Natural killer cell (primary cell): ENCODE measurements at regions of chr1 and their contacts with region 1.

Region 1: GRCh38 chr1:107936498-107937481 is 28.2 kb downstream of the VAV3 start:
- DNase-seq: peak; percentile 64 to 71
- ATAC-seq: peak; percentile 84 to 92 (median 91)
- H3K4me3 ChIP-seq: no peak overlapping the region
- H3K4me3 Mint-ChIP-seq: peak overlapping the region; percentile 76
- H3K27ac ChIP-seq: peak overlapping the region; percentile 59
- H3K27ac Mint-ChIP-seq: peak overlapping the region; percentile 83 to 90
- H3K4me1 ChIP-seq: peaks cover 31% of the 10 kb centered on the region
- H3K4me1 Mint-ChIP-seq: peaks cover 82 to 87% of the 10 kb centered on the region in 2 donors
- H3K27me3 ChIP-seq: no peaks in the 10 kb centered on the region
- H3K27me3 Mint-ChIP-seq: no peaks in the 10 kb centered on the region
- CTCF ChIP-seq: no peak

Region 2: GRCh38 chr1:107782217-107782845 is 154.5 kb before region 1 on chr1:
- intact Hi-C with region 1: loop called (anchors 1 kb)
- DNase-seq: peak in 1 of 2 donors; percentile 86
- ATAC-seq: peak in 1 of 3 donors; percentile 45
- H3K4me3 ChIP-seq: no peak overlapping the region
- H3K4me3 Mint-ChIP-seq: no peak overlapping the region
- H3K27ac ChIP-seq: no peak overlapping the region
- H3K27ac Mint-ChIP-seq: peak overlapping the region; percentile 91 to 92
- H3K4me1 ChIP-seq: peaks cover 18% of the 10 kb centered on the region
- H3K4me1 Mint-ChIP-seq: peaks cover 50 to 55% of the 10 kb centered on the region in 2 donors
- H3K27me3 ChIP-seq: no peaks in the 10 kb centered on the region
- H3K27me3 Mint-ChIP-seq: no peaks in the 10 kb centered on the region
- CTCF ChIP-seq: peak; percentile 95

Region 3: DNA sequence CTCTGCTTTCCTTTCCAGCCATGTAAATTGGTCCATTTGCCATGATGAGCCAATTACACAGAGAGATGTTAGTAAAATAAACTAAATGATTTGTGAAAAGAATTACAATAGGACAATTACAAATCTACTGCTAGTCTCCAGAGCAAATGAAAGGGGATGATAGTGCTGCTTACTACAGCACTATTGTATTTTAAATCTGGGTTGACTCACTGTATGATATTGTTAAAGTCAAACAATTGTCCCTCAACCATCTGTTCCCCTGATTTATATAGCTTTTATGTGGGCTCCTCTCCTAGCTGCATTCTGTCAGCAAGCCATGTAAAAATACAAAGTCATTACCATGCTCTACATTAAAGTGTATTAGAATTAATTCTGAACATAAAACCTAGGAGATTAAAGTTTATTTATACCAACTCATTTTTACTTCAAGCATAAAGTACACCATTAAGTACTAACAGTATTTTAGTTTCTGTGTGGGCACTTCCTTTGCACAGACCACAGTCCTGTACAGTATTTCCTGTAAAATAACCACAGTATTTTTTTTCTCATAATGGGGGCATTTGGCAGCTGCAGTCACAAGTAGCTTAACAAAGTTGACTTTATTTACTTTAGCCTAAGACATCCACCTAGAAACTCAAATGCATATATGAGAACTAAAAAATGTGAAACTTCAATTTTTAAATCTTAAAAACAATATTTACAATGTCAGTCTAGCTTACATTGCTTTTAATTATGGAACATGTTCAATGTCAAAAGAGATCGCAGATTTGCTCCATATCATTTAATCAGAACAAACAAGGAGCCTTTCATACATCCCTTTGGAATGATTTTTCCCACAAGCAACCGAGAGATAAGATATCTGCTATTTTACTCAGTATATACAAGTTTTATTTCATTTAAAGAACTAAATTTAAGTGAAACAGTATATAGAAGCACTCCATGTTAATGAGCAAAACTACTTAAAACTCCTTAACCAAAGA is 107.4 kb before region 1 on chr1:
- intact Hi-C with region 1: loop called (anchors 2 kb)
- DNase-seq: peak in 1 of 2 donors; percentile 56
- ATAC-seq: peak; percentile 82 to 96 (median 92)
- H3K4me3 ChIP-seq: no peak overlapping the region
- H3K4me3 Mint-ChIP-seq: peak overlapping the region; percentile 88
- H3K27ac ChIP-seq: peak overlapping the region; percentile 65
- H3K27ac Mint-ChIP-seq: peak overlapping the region; percentile 87 to 90
- H3K4me1 ChIP-seq: peaks cover 37% of the 10 kb centered on the region
- H3K4me1 Mint-ChIP-seq: peaks cover 82 to 88% of the 10 kb centered on the region in 2 donors
- H3K27me3 ChIP-seq: no peaks in the 10 kb centered on the region
- H3K27me3 Mint-ChIP-seq: no peaks in the 10 kb centered on the region
- CTCF ChIP-seq: no peak

Region 4: DNA sequence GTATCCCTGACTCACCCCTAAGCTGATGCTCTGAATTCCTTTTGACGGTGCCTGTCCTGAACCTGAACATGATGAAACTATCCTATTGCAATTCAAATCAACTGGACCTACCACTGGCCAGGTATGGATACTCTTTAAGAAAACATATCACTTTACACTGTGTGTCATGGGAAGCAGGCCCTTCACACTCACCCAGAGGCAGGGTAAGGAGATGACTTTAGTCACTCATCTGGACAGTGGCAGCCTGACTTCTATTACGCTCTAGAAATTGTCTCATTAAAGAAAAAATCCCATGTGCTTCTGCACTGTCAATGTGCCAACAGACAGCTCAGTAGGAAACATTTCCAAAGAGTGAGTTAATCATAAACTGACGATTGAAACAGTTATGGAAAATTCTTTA is 66.1 kb before region 1 on chr1:
- intact Hi-C with region 1: loop called (anchors 1 kb)
- DNase-seq: no peak
- ATAC-seq: peak in 1 of 3 donors; percentile 52
- H3K4me3 ChIP-seq: no peak overlapping the region
- H3K4me3 Mint-ChIP-seq: peak overlapping the region; percentile 49
- H3K27ac ChIP-seq: peak overlapping the region; percentile 76
- H3K27ac Mint-ChIP-seq: peak overlapping the region; percentile 89 to 91
- H3K4me1 ChIP-seq: peaks cover 30% of the 10 kb centered on the region
- H3K4me1 Mint-ChIP-seq: peaks cover 70 to 87% of the 10 kb centered on the region in 2 donors
- H3K27me3 ChIP-seq: no peaks in the 10 kb centered on the region
- H3K27me3 Mint-ChIP-seq: no peaks in the 10 kb centered on the region
- CTCF ChIP-seq: no peak

Region 5: GRCh38 chr1:107963601-107964335 is 27.0 kb after region 1 on chr1:
- intact Hi-C with region 1: loop called (anchors 1 kb)
- DNase-seq: peak; percentile 47 to 75
- ATAC-seq: peak; percentile 69 to 82 (median 70)
- H3K4me3 ChIP-seq: peak overlapping the region; percentile 84
- H3K4me3 Mint-ChIP-seq: peak overlapping the region; percentile 98
- H3K27ac ChIP-seq: peak overlapping the region; percentile 83
- H3K27ac Mint-ChIP-seq: peak overlapping the region; percentile 95 to 97
- H3K4me1 ChIP-seq: peaks cover 18% of the 10 kb centered on the region
- H3K4me1 Mint-ChIP-seq: peaks cover 47 to 55% of the 10 kb centered on the region in 2 donors
- H3K27me3 ChIP-seq: no peaks in the 10 kb centered on the region
- H3K27me3 Mint-ChIP-seq: no peaks in the 10 kb centered on the region
- CTCF ChIP-seq: no peak

Region 6: GRCh38 chr1:108125312-108126138 is 188.7 kb after region 1 on chr1:
- intact Hi-C with region 1: loop called (anchors 5 kb)
- DNase-seq: peak; percentile 48 to 88
- ATAC-seq: peak; percentile 91 to 100 (median 99)
- H3K4me3 ChIP-seq: no peak overlapping the region
- H3K4me3 Mint-ChIP-seq: no peak overlapping the region
- H3K27ac ChIP-seq: no peak overlapping the region
- H3K27ac Mint-ChIP-seq: peak overlapping the region; percentile 36 to 54
- H3K4me1 ChIP-seq: peaks cover 4% of the 10 kb centered on the region
- H3K4me1 Mint-ChIP-seq: peaks cover 20% of the 10 kb centered on the region in 2 donors
- H3K27me3 ChIP-seq: no peaks in the 10 kb centered on the region
- H3K27me3 Mint-ChIP-seq: no peaks in the 10 kb centered on the region
- CTCF ChIP-seq: peak; percentile 95